Breast epithelium (tissue), 4 donors: ENCODE measurements at regions of chr17 and their contacts with region 1.

Region 1: GRCh38 chr17:50949989-50950881 is 84.1 kb upstream of the TOB1 start:
- DNase-seq: peak; percentile 85 to 89
- H3K4me3 ChIP-seq: peak overlapping the region in 2 of 3 donors; percentile 2 to 52
- H3K27ac ChIP-seq: peak overlapping the region; percentile 89 to 94
- H3K4me1 ChIP-seq: peaks cover 21 to 31% of the 10 kb centered on the region in 2 donors
- H3K27me3 ChIP-seq: no peaks in the 10 kb centered on the region
- CTCF ChIP-seq: peak; percentile 72 to 87 (median 81)
- POLR2A ChIP-seq: no peak

Region 2: GRCh38 chr17:49210158-49211029 is 1739.8 kb before region 1 on chr17 and contains the starts of genes ABI3 and GNGT2:
- intact Hi-C with region 1: no loop called
- DNase-seq: no peak
- H3K4me3 ChIP-seq: peak within 1 kb of the TSS; percentile 32 to 58 (median 40)
- H3K27ac ChIP-seq: peak within 1 kb of the TSS; percentile 21 to 51
- H3K4me1 ChIP-seq: no peaks in the 10 kb centered on the region
- H3K27me3 ChIP-seq: peaks cover 2 to 14% of the 10 kb centered on the region in 2 donors
- CTCF ChIP-seq: no peak
- POLR2A ChIP-seq: no peak
- total RNA-seq, gene ABI3: 1.9 to 5.2 (median 5.1) TPM
- total RNA-seq, gene GNGT2: 0.48 to 0.66 TPM in 2 of 3 donors, not detected in the other

Region 3: DNA sequence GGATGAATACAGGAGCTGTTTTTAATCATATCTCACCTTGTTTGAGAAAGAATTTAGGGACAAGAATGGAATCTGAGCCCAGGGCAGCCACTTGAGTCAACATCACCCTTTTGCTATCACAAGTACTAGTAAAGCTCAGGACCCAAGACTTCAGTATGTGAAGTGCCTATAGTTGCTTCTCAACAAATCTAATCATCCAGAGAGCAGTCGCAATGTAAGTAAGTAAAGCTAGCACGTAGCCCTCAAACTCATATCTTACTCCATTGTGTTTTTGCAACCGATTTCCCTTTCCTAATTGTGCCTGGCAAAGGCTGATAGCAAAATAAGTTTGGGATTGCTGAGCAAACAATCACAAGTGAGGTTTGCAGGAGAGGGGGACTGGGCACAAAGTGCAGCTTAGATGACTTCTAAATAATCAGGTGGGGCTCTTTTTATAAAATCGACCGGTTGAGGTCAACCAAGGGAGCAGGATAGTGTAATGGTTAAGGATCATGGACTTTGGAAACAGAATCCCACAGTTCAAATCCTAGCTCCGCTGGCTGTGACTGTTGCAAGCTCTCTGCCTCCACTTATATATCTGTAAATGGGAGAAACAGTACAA is 97.1 kb before region 1 on chr17:
- intact Hi-C with region 1: loop called (anchors 5 kb)
- DNase-seq: no peak
- H3K4me3 ChIP-seq: no peak overlapping the region
- H3K27ac ChIP-seq: peak overlapping the region in 1 of 2 donors; percentile 68
- H3K4me1 ChIP-seq: no peaks in the 10 kb centered on the region
- H3K27me3 ChIP-seq: no peaks in the 10 kb centered on the region
- CTCF ChIP-seq: no peak
- POLR2A ChIP-seq: no peak

Region 4: DNA sequence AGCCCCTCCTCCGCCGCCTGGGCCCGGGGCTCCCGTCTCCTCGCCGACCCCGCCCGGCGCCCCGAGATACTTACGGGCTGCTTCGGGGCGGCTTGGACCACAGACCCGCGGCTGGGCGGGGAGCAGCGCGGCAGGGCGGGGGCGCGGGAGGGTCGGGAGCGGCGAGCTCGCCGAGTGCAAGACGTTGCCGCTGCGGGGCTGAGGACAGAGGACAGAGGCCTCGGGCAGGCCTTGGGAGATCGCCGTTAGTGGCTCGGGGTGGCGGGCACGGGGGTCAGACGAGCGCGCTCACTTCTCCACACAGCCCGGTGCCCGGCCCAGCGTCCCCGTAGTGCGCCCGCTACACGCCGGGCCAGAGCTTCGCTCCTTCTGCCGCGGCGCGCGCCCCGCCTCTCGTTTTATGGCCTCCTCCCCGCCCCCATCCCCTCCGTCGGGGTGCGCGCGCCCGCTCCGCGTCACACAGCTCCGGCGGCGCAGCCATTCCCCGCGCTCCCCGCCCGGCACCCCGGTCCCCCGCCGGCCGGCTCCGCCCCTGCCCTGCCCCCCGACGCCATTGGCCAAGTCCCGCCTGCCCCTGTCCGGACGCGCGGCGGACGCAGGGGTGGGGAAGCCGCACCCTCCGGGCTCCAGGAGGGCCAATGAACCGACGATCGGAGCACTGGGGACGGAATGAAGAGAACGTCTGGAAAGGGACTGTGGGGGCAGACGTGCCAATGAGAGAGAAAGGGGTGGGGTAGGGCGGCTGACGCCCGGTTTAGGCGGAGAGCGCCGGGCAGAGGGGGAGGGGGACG is 84.1 kb before region 1 on chr17 and contains the start of gene TOB1:
- intact Hi-C with region 1: loop called (anchors 5 kb)
- DNase-seq: peak; percentile 98 to 99
- H3K4me3 ChIP-seq: peak within 1 kb of the TSS; percentile 80 to 98 (median 97)
- H3K27ac ChIP-seq: peak within 1 kb of the TSS; percentile 100
- H3K4me1 ChIP-seq: no peaks in the 10 kb centered on the region
- H3K27me3 ChIP-seq: no peaks in the 10 kb centered on the region
- CTCF ChIP-seq: no peak
- POLR2A ChIP-seq: peak; percentile 96
- total RNA-seq, gene TOB1: 12.6 to 145 (median 54.1) TPM

Region 5: GRCh38 chr17:50931144-50931908 is 18.9 kb before region 1 on chr17:
- intact Hi-C with region 1: no loop called
- DNase-seq: no peak
- H3K4me3 ChIP-seq: peak overlapping the region; percentile 35 to 70 (median 52)
- H3K27ac ChIP-seq: peak overlapping the region; percentile 94 to 95
- H3K4me1 ChIP-seq: peaks cover 4% of the 10 kb centered on the region in 2 donors
- H3K27me3 ChIP-seq: no peaks in the 10 kb centered on the region
- CTCF ChIP-seq: no peak
- POLR2A ChIP-seq: no peak

Region 6: DNA sequence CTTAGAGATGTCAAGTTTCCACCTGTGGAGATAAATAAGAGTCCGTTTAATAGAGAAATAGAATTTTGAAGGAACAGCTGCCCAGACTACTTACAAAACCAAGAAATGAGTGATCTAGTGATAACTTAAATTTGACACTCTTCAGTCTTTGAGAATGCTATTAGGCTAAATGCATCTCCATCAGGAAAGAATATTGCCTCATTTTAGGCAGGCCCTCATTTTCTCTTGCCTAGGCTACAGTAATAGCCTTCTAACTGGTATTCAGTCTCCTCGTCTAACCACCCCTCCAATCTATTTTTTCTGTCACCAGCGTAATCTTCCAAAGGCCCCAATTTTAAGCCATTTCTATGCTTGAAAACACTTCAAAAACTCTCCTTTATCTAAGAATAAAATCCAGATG is 1746.1 kb after region 1 on chr17:
- intact Hi-C with region 1: no loop called
- DNase-seq: no peak
- H3K4me3 ChIP-seq: no peak overlapping the region
- H3K27ac ChIP-seq: no peak overlapping the region
- H3K4me1 ChIP-seq: no peaks in the 10 kb centered on the region
- H3K27me3 ChIP-seq: no peaks in the 10 kb centered on the region
- CTCF ChIP-seq: no peak
- POLR2A ChIP-seq: no peak